Common myeloid progenitor, CD34-positive (primary cell): ENCODE measurements at regions of chr14 and their contacts with region 1.

Region 1: DNA sequence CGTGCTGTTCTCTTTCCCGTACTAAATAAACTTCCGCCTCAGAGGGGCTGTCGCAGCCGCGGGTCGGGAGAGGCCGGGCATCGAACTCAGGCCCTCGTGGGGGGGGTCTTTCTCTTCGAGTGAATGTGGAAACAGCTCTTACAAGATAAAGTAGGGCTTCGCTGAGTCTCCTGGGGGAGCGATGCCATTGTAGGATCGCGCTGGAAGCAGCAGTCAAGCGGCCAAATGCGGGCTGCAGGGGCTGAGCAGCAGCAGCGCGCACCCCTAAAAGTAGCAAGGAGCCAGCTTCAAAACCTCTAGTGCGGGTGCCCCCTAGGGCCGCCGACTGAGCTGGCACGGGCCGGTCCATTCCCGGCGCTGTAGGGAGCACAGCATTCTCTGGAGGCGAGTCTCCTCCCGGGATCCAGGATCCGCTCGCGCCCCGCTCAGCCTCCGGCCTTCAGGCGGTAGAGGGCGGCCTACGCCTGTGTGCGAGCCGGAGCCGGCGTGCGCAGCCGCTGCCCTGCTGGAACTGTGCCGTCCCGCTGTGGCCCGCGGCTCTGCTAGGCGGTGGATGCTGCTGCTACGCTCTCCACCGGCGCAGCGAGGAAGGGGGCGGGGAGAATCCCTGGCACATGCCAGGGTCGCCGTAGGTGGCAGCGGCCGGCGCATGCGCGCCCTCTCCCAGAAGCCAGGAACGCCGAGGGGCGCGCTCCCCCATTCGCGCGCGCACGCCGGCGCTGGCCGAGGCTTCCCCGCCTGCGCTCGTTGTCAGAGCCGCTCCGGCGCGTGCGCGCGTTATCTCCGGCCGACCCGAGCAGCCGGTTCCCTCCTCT is at the start of gene FUT8:
- DNase-seq: peak; percentile 95 to 98 (median 98)
- H3K4me3 ChIP-seq: peak within 1 kb of the TSS; percentile 80 to 96 (median 90)
- H3K27ac ChIP-seq: peak within 1 kb of the TSS; percentile 49 to 86
- H3K4me1 ChIP-seq: peaks cover 5 to 20% (median 9%) of the 10 kb centered on the region in 4 experiments
- H3K27me3 ChIP-seq: no peaks in the 10 kb centered on the region

Region 2: DNA sequence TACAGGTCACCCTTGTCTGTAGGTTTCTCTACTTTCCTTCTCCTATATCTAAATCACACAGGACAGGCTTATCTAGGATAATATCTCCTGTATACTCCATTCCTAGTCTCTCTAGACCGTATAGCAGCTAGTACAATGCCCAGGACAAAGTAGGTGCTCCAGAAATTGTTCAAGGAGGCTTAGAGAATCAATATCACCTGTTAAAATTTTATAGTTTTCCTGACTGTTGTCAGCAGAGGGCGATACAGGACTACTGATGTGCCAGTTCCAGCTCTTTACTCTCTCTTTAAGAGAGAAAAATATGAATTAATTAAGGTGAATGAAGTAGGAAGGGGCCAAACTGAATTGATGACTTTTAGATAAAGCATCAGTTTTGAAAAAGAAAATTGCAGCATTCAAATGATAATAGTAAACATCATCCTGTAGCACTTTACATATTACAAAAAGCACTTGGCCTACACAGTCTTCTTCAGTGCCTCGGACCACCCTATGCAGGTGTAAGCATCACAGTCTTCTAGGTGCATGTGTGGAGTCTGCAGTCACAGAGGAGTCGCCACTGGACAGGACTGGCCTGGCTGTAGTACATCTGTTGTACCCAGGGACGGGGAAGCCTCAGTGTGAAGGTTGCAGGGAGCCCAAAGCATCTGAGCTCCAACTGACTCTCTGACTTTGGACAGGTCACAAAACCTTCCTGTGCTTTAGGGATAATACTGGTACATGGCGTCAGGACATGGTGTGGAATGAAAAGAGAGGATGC is 248.0 kb before region 1 on chr14:
- CTCF ChIA-PET with region 1: interaction called, 47 read pairs
- POLR2A ChIA-PET with region 1: no interaction called
- DNase-seq: peak; percentile 58 to 78 (median 69)
- H3K4me3 ChIP-seq: no peak overlapping the region
- H3K27ac ChIP-seq: no peak overlapping the region
- H3K4me1 ChIP-seq: no peaks in the 10 kb centered on the region
- H3K27me3 ChIP-seq: no peaks in the 10 kb centered on the region

Region 3: GRCh38 chr14:65170768-65171507 is 241.3 kb before region 1 on chr14:
- CTCF ChIA-PET with region 1: interaction called, 47 read pairs
- POLR2A ChIA-PET with region 1: interaction called, 3 read pairs
- DNase-seq: peak; percentile 85 to 98 (median 98)
- H3K4me3 ChIP-seq: peak overlapping the region in 5 of 7 experiments; percentile 33 to 63 (median 54)
- H3K27ac ChIP-seq: peak overlapping the region; percentile 42 to 56
- H3K4me1 ChIP-seq: peaks cover 6 to 15% (median 13%) of the 10 kb centered on the region in 4 experiments
- H3K27me3 ChIP-seq: no peaks in the 10 kb centered on the region

Region 4: GRCh38 chr14:65222440-65222858 is 189.8 kb before region 1 on chr14:
- CTCF ChIA-PET with region 1: interaction called, 24 read pairs
- POLR2A ChIA-PET with region 1: no interaction called
- DNase-seq: peak; percentile 47 to 54 (median 50)
- H3K4me3 ChIP-seq: no peak overlapping the region
- H3K27ac ChIP-seq: no peak overlapping the region
- H3K4me1 ChIP-seq: peaks cover 0 to 24% (median 9%) of the 10 kb centered on the region in 4 experiments
- H3K27me3 ChIP-seq: no peaks in the 10 kb centered on the region

Region 5: DNA sequence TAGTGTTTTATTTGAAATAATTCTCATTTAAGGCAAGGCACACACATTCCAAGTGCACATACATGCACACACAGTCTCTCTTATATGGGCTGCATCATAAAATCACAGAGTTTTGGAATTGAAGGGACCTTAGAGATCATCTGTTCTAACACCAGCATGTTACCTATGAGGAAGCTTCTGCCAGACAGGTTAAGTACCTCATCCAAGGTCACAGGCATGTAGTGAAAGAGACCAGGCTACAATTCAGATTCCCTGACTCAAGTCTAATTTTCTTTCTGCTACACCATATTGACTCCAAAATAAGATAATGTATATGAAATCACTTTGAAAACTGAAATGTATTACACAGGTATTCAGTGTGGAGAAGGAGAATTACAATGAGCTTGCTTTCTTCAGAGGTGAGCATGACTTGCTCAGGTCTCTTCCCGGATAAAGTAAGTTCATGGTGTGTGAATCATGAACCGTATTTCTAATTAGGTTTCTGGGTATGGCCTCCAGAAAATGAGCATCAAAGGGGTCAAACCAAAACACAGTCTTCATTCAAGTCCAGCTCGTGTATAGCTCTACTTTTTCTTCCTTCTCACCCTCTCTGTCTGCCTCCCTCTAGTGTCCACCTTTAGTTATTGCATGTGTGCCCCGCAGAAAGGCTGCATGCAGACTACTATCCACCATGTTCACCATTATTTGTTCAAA is 412.2 kb after region 1 on chr14:
- CTCF ChIA-PET with region 1: interaction called, 51 read pairs
- POLR2A ChIA-PET with region 1: no interaction called
- DNase-seq: peak; percentile 71 to 86 (median 78)
- H3K4me3 ChIP-seq: no peak overlapping the region
- H3K27ac ChIP-seq: no peak overlapping the region
- H3K4me1 ChIP-seq: no peaks in the 10 kb centered on the region
- H3K27me3 ChIP-seq: peaks cover 0 to 5% (median 0%) of the 10 kb centered on the region in 5 experiments